Common myeloid progenitor, CD34-positive (primary cell): ENCODE measurements at regions of chr16 and their contacts with region 1.

Region 1: DNA sequence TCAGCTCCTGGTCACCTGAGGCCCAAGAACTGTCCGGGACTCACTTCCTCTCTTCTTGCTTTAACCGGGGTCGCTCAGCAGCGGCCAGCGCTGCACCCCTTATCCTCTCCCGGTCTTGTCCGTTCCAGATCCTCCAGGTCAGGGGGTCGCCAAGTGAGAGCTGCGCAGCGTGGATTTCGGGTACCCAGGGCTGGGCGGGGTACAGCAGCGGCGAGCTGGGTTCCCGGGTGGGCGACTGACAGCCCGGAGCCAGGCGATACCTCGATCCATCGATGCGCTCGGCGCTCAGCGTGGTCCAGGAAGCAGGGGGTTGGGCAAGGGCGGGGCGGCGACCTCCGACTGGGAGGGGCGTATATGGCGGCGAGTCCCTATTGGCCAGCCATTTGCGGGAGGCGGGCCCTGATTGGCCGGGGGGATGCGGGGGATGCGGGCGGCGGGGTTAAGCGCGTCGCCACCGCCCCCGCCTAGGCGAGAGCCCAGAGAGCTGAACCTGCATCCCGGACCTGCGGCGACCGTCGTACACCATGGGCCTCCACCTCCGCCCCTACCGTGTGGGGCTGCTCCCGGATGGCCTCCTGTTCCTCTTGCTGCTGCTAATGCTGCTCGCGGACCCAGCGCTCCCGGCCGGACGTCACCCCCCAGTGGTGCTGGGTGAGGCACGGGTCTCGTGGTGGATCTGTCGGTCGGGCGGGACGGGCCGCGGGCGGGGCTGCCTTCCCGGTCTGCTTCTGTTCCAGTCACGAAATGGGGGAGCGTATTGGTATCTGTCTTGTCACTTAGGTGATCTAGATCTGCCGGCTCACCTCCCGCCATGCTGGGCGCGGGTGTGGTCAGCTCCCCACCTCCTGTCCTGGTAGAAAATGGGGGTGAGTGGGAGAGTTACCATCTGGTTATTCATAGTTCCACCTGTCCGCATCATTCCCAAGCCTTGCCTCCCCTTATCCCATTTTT is at the start of gene PLA2G15:
- DNase-seq: peak; percentile 93 to 97 (median 96)
- H3K4me3 ChIP-seq: peak within 1 kb of the TSS; percentile 69 to 99 (median 92)
- H3K27ac ChIP-seq: peak within 1 kb of the TSS in 1 of 2 experiments; percentile 66
- H3K4me1 ChIP-seq: peaks cover 4 to 39% (median 34%) of the 10 kb centered on the region in 4 experiments
- H3K27me3 ChIP-seq: no peaks in the 10 kb centered on the region

Region 2: GRCh38 chr16:68257906-68258800 is 13.0 kb after region 1 on chr16:
- CTCF ChIA-PET with region 1: interaction called, 92 read pairs
- POLR2A ChIA-PET with region 1: no interaction called
- DNase-seq: peak; percentile 90 to 99 (median 98)
- H3K4me3 ChIP-seq: peak overlapping the region in 5 of 7 experiments; percentile 17 to 44 (median 26)
- H3K27ac ChIP-seq: peak overlapping the region; percentile 59 to 84
- H3K4me1 ChIP-seq: peaks cover 0 to 48% (median 35%) of the 10 kb centered on the region in 4 experiments
- H3K27me3 ChIP-seq: no peaks in the 10 kb centered on the region

Region 3: GRCh38 chr16:68351962-68352431 is 106.8 kb after region 1 on chr16:
- CTCF ChIA-PET with region 1: no interaction called
- POLR2A ChIA-PET with region 1: no interaction called
- DNase-seq: no peak
- H3K4me3 ChIP-seq: no peak overlapping the region
- H3K27ac ChIP-seq: no peak overlapping the region
- H3K4me1 ChIP-seq: peaks cover 0 to 24% (median 21%) of the 10 kb centered on the region in 4 experiments
- H3K27me3 ChIP-seq: no peaks in the 10 kb centered on the region

Region 4: DNA sequence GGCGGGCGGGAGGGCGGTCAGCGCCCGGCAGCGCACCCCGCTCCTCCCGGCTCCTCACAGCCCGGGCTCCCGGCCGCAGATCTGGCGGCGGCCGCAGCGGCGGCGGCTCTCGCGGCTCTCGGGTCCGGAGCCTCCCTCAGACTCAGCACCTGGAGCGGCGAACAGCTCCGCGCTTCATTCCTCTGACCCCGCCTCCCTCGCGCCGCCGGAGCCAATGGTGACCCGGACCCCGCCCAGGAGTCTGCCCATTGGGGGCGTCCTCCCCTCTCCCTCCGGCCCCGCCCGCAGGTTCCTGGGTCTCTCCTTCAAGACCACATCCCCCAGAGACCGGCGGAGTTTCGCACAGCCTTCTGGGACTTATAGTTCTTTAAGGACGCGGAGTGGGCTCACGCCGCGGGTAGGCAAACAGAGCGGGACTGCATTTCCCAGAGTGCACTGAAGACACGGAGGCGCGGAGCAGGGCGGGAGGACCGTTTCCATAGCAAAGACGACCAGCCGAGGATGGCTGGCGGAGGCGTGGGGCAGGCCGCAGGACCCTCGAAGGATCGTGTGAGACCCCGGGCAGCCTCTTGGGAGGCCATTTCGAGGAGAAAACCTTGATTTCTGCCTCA is 203.3 kb after region 1 on chr16 and contains the start of gene SMPD3:
- CTCF ChIA-PET with region 1: no interaction called
- POLR2A ChIA-PET with region 1: no interaction called
- DNase-seq: peak; percentile 98 to 99 (median 99)
- H3K4me3 ChIP-seq: peak within 1 kb of the TSS; percentile 7 to 73 (median 52)
- H3K27ac ChIP-seq: no peak within 1 kb of the TSS
- H3K4me1 ChIP-seq: peaks cover 0 to 19% (median 11%) of the 10 kb centered on the region in 4 experiments
- H3K27me3 ChIP-seq: peaks cover 2 to 31% (median 11%) of the 10 kb centered on the region in 5 experiments